ENCODE measurements at regions of chr12 and their contacts with region 1.

Region 1: GRCh38 chr12:120971299-120972179 is 6.8 kb upstream of the HNF1A start:
- DNase-seq: peak; percentile 57
- ATAC-seq: peak; percentile 95
- H3K4me3 ChIP-seq: no peak overlapping the region
- H3K27ac ChIP-seq: no peak overlapping the region
- H3K4me1 ChIP-seq: no peaks in the 10 kb centered on the region
- H3K27me3 ChIP-seq: no peaks in the 10 kb centered on the region
- CTCF ChIP-seq: peak; percentile 72 to 83 (median 79)
- EP300 ChIP-seq: no peak
- POLR2A ChIP-seq: no peak
- RAD21 ChIP-seq: peak; percentile 95

Region 2: GRCh38 chr12:120580787-120581723 is 390.5 kb before region 1 on chr12 and contains the start of gene POP5:
- CTCF ChIA-PET with region 1: interaction called, 46 read pairs
- POLR2A ChIA-PET with region 1: no interaction called
- RAD21 ChIA-PET with region 1: interaction called, 45 read pairs
- SMC1A ChIA-PET with region 1: interaction called, 40 read pairs
- in situ Hi-C with region 1: no loop called
- intact Hi-C with region 1: loop called (anchors 1 kb)
- DNase-seq: peak; percentile 93
- ATAC-seq: peak; percentile 95
- H3K4me3 ChIP-seq: peak within 1 kb of the TSS; percentile 91
- H3K27ac ChIP-seq: peak within 1 kb of the TSS; percentile 44
- H3K4me1 ChIP-seq: peaks cover 11% of the 10 kb centered on the region
- H3K27me3 ChIP-seq: no peaks in the 10 kb centered on the region; a peak in 1 of 4 replicates
- CTCF ChIP-seq: no peak
- EP300 ChIP-seq: no peak
- POLR2A ChIP-seq: peak; percentile 97
- RAD21 ChIP-seq: no peak
- polyA plus RNA-seq, gene POP5: 217 to 234 TPM

Region 3: DNA sequence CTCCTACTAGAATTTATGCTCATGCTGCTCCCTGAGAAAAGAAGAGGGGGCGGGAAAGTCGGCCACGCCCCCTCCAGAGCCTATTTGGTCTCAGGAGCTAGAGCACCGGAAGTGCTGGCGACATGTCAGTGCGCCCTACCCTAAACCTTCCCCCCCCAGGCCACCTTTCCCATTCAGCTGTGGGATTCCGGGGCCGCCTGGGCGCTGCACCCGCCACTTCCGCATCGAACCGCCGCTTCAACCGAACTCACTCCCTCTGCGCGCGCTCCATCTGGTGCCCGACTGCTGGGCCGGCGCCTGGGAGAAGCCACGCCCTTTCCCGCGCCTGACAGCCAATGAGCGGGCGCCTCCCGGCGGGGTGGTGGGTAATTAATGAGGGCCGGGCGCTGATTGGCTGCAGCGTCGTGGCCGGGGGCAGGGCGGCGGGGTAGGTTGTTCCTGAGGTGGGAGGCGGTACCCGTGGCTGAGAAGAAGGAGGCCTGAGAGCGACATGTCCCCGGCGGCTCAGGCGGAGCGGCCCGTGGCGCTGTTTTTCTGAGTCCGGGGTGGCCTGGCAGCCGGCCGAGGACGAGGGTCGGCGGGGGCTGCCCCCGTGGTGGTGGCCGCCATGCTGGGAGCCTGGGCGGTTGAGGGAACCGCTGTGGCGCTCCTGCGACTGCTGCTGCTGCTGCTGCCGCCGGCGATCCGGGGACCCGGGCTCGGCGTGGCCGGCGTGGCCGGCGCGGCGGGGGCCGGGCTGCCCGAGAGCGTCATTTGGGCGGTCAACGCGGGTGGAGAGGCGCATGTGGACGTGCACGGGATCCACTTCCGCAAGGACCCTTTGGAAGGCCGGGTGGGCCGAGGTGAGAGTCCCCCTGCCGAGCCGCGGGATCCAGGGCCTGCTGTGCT is 284.6 kb before region 1 on chr12 and contains the start of gene MLEC:
- CTCF ChIA-PET with region 1: interaction called, 29 read pairs
- POLR2A ChIA-PET with region 1: interaction called, 7 read pairs
- RAD21 ChIA-PET with region 1: interaction called, 8 read pairs
- SMC1A ChIA-PET with region 1: interaction called, 23 read pairs
- in situ Hi-C with region 1: no loop called
- intact Hi-C with region 1: loop called (anchors 2 kb)
- DNase-seq: peak; percentile 91
- ATAC-seq: peak; percentile 78
- H3K4me3 ChIP-seq: peak within 1 kb of the TSS; percentile 97
- H3K27ac ChIP-seq: peak within 1 kb of the TSS; percentile 96
- H3K4me1 ChIP-seq: peaks cover 15% of the 10 kb centered on the region
- H3K27me3 ChIP-seq: no peaks in the 10 kb centered on the region
- CTCF ChIP-seq: peak; percentile 26 to 79 (median 41); a peak in 5 of 6 replicates
- EP300 ChIP-seq: peak in 1 of 2 experiments; percentile 21; a peak in 1 of 4 replicates
- POLR2A ChIP-seq: peak; percentile 91
- RAD21 ChIP-seq: peak; percentile 68
- polyA plus RNA-seq, gene MLEC: 26.7 to 28.2 TPM

Region 4: DNA sequence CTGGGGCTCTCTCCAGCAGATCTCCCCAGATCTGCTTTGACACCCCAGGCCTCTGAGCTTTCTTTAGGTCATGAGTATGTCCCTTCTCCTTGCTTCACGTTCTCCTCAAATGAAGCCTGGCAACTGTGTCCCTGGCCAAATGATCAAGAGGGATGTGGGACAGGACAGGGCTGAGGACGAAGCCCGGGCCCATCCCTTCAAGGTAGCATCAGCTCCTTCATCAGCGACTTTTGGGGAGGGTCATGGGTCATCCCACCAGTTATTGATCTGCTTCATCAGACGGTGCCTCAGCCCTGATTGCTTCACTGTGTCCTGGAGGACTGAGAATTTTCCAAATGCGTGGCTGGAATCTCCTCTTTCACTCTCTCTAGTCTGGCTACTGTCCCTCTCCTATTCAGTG is 213.6 kb before region 1 on chr12:
- CTCF ChIA-PET with region 1: interaction called, 10 read pairs
- POLR2A ChIA-PET with region 1: no interaction called
- RAD21 ChIA-PET with region 1: interaction called, 6 read pairs
- SMC1A ChIA-PET with region 1: interaction called, 4 read pairs
- in situ Hi-C with region 1: no loop called
- intact Hi-C with region 1: no loop called
- DNase-seq: no peak
- ATAC-seq: no peak
- H3K4me3 ChIP-seq: no peak overlapping the region
- H3K27ac ChIP-seq: no peak overlapping the region
- H3K4me1 ChIP-seq: no peaks in the 10 kb centered on the region
- H3K27me3 ChIP-seq: no peaks in the 10 kb centered on the region
- CTCF ChIP-seq: no peak
- EP300 ChIP-seq: no peak
- POLR2A ChIP-seq: no peak
- RAD21 ChIP-seq: no peak

Region 5: DNA sequence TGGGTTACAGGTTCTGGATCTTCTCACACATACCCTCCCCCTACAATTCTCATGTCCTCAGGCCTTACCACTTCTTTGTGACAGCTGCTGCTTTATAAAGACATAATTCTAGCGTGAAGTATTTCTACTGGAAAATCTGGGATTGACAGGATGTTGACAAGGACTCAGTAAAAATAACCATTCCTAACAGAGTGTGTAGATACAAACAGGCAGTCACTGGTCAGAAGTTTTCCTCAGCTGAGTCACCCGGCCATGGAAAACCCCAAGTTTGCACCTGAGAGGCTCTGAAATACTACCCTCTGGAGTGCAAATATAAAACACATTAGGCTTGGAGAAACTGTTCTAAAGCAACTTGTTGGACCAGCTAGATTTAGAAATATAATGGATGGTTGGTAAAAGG is 121.8 kb before region 1 on chr12:
- CTCF ChIA-PET with region 1: interaction called, 19 read pairs
- POLR2A ChIA-PET with region 1: no interaction called
- RAD21 ChIA-PET with region 1: interaction called, 14 read pairs
- SMC1A ChIA-PET with region 1: interaction called, 9 read pairs
- in situ Hi-C with region 1: no loop called
- intact Hi-C with region 1: no loop called
- DNase-seq: no peak
- ATAC-seq: no peak
- H3K4me3 ChIP-seq: no peak overlapping the region
- H3K27ac ChIP-seq: peak overlapping the region; percentile 54
- H3K4me1 ChIP-seq: peaks cover 68% of the 10 kb centered on the region
- H3K27me3 ChIP-seq: no peaks in the 10 kb centered on the region
- CTCF ChIP-seq: no peak
- EP300 ChIP-seq: no peak
- POLR2A ChIP-seq: no peak
- RAD21 ChIP-seq: no peak

Region 6: GRCh38 chr12:120909633-120910298 is 61.8 kb before region 1 on chr12:
- CTCF ChIA-PET with region 1: interaction called, 8 read pairs
- POLR2A ChIA-PET with region 1: no interaction called
- RAD21 ChIA-PET with region 1: interaction called, 14 read pairs
- SMC1A ChIA-PET with region 1: interaction called, 19 read pairs
- in situ Hi-C with region 1: no loop called
- intact Hi-C with region 1: no loop called
- DNase-seq: no peak
- ATAC-seq: peak; percentile 88
- H3K4me3 ChIP-seq: no peak overlapping the region
- H3K27ac ChIP-seq: no peak overlapping the region
- H3K4me1 ChIP-seq: peaks cover 3% of the 10 kb centered on the region; the same call in 1 of the 2 replicates
- H3K27me3 ChIP-seq: no peaks in the 10 kb centered on the region
- CTCF ChIP-seq: no peak
- EP300 ChIP-seq: no peak
- POLR2A ChIP-seq: no peak
- RAD21 ChIP-seq: no peak

Region 7: GRCh38 chr12:121060149-121061001 is 88.8 kb after region 1 on chr12:
- CTCF ChIA-PET with region 1: interaction called, 12 read pairs
- POLR2A ChIA-PET with region 1: no interaction called
- RAD21 ChIA-PET with region 1: interaction called, 8 read pairs
- SMC1A ChIA-PET with region 1: interaction called, 4 read pairs
- in situ Hi-C with region 1: no loop called
- intact Hi-C with region 1: no loop called
- DNase-seq: peak; percentile 56
- ATAC-seq: peak; percentile 96
- H3K4me3 ChIP-seq: peak overlapping the region; percentile 43
- H3K27ac ChIP-seq: peak overlapping the region; percentile 96
- H3K4me1 ChIP-seq: peaks cover 10% of the 10 kb centered on the region
- H3K27me3 ChIP-seq: no peaks in the 10 kb centered on the region
- CTCF ChIP-seq: peak; percentile 50 to 66 (median 56); a peak in 5 of 6 replicates
- EP300 ChIP-seq: no peak
- POLR2A ChIP-seq: peak; percentile 63
- RAD21 ChIP-seq: peak; percentile 69

Region 8: GRCh38 chr12:121719926-121720414 is 748.4 kb after region 1 on chr12:
- CTCF ChIA-PET with region 1: no interaction called
- POLR2A ChIA-PET with region 1: no interaction called
- RAD21 ChIA-PET with region 1: no interaction called
- SMC1A ChIA-PET with region 1: no interaction called
- in situ Hi-C with region 1: no loop called
- intact Hi-C with region 1: no loop called
- DNase-seq: no peak
- ATAC-seq: no peak
- H3K4me3 ChIP-seq: no peak overlapping the region
- H3K27ac ChIP-seq: no peak overlapping the region
- H3K4me1 ChIP-seq: no peaks in the 10 kb centered on the region
- H3K27me3 ChIP-seq: no peaks in the 10 kb centered on the region
- CTCF ChIP-seq: no peak
- EP300 ChIP-seq: no peak
- POLR2A ChIP-seq: no peak
- RAD21 ChIP-seq: no peak